Activated CD8-positive, alpha-beta T cell treated with anti-CD3 and anti-CD28 coated beads, Interleukin-2, amount 10 ng/mL, durations not matched to agents 7 days and 5 days (primary cell): ENCODE measurements at regions of chr22 and their contacts with region 1.

Region 1: DNA sequence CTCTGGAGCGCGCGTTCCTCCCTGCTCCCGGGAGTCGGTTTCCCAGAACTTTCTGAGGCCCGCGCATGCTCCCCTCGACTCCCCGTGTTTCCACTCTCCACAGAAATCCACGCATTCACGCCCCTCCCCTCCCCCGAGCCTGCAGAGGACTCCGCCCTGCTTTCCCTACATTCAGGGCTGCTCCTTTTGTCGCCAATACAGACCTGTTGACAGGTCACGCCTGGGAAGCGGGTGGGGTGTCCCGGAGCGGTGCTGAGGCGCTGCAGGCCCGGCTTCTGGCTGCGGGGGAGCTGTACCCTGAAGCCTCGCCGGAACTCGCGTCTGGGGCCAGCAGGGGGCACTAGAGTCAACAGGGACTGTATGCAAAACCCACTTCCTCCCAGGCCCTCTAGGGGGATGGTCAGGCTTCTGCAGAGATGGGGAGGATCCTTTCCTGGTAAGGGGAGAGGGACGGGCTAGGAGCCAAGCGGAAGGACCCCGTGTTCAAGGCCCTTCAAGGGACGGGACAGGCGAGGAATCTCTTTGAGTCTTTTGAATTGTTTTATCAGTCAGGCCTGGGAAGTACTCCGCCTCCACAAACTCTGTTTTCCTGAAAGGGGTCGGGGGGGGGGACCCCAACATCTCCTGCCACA is at the start of gene PRAME:
- DNase-seq: peak; percentile 89
- ATAC-seq: peak; percentile 96
- H3K4me3 Mint-ChIP-seq: no peak within 1 kb of the TSS
- H3K27ac Mint-ChIP-seq: no peak within 1 kb of the TSS
- H3K4me1 Mint-ChIP-seq: peaks cover 5% of the 10 kb centered on the region
- H3K27me3 Mint-ChIP-seq: peaks cover 4% of the 10 kb centered on the region
- total RNA-seq, gene PRAME: not detected

Region 2: DNA sequence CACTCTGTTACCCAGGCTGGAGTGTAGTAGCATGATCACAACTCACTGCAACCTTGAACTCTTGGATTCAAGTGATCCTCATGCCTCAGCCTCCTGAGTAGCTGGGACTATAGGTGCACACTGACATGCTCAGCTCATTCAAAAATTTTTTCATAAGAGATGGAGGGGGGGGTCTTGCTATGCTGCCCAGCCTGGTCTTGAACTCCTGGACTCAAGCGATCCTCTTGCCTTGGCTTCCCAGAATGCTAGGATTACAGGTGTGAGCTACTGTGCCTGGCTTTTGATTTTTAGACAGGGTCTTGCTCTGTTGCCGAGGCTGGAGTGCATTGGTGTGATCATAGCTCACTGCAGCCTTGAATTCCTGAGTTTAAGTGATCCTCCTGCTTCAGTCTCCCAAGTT is 14.0 kb before region 1 on chr22:
- CTCF ChIA-PET with region 1: interaction called, 10 read pairs
- POLR2A ChIA-PET with region 1: no interaction called
- DNase-seq: no peak
- ATAC-seq: no peak
- H3K4me3 Mint-ChIP-seq: no peak overlapping the region
- H3K27ac Mint-ChIP-seq: no peak overlapping the region
- H3K4me1 Mint-ChIP-seq: no peaks in the 10 kb centered on the region
- H3K27me3 Mint-ChIP-seq: peaks cover 2% of the 10 kb centered on the region